ENCODE measurements at regions of chr14 and their contacts with region 1.

Region 1: DNA sequence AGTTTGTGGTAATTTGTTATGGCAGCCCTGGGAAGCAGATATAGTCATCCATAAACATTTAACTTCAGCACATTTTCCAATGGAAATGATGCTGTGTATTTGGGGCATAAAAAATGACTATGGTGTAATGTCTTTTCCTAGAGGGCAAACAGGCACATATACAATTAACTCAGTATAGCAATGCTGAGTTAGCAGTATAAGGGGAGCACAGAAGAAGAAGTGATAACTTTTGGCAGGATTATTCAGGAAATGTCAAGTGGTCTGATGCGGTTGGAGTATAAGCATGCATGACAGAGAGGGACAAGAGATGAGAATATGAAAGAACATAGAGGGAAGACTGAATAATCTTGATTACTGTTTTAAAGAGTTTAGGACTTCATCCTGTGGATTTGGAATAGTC is 55.3 kb upstream of the PRKD1 start:
- DNase-seq: no peak
- H3K4me3 ChIP-seq: no peak overlapping the region
- H3K27ac ChIP-seq: no peak overlapping the region
- H3K4me1 ChIP-seq: no peaks in the 10 kb centered on the region
- H3K27me3 ChIP-seq: no peaks in the 10 kb centered on the region
- CTCF ChIP-seq: no peak
- POLR2A ChIP-seq: no peak

Region 2: GRCh38 chr14:28436821-28437220 is 1546.2 kb before region 1 on chr14:
- intact Hi-C with region 1: loop called (anchors 10 kb)
- DNase-seq: no peak
- H3K4me3 ChIP-seq: no peak overlapping the region
- H3K27ac ChIP-seq: no peak overlapping the region
- H3K4me1 ChIP-seq: no peaks in the 10 kb centered on the region
- H3K27me3 ChIP-seq: no peaks in the 10 kb centered on the region
- CTCF ChIP-seq: no peak
- POLR2A ChIP-seq: no peak

Region 3: DNA sequence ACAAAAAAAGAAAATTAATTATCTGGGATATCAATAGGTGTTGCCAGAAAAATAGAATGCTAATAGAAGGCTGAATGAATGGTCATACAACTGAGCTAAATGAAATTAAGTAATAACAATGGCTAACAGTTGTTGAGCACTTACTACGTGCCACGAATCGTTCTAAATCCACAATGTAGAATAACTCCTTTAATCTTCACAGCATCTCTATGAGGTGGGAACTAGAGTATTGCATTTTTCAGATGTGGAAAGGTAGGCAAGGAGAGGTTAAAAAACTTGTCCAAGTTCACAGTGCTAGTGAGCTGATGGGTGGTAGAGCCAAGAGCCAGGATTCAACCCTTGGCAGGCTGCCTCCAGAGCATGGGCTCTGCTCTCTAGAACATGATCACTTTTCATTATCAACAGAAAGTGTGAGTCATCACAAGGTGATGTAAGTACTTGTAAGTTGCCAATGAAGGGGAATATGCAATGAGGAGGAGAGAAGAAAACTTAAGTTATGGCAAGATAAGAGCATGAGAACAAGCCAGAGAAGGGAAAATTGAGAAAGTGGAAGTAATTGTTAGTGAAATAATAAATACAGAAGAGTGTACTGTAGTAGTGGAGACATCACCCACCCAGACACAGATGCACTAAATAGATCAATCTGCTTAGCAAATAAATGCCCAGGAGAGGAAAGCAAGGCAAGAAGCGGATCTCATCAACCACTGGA is 177.4 kb before region 1 on chr14:
- intact Hi-C with region 1: no loop called
- DNase-seq: no peak
- H3K4me3 ChIP-seq: no peak overlapping the region
- H3K27ac ChIP-seq: no peak overlapping the region
- H3K4me1 ChIP-seq: peaks cover 0 to under 1% of the 10 kb centered on the region in 2 donors
- H3K27me3 ChIP-seq: no peaks in the 10 kb centered on the region
- CTCF ChIP-seq: no peak
- POLR2A ChIP-seq: no peak

Measured in breast epithelium (tissue), 4 donors.